Naive thymus-derived CD4-positive, alpha-beta T cell (primary cell): ENCODE measurements at regions of chr2 and their contacts with region 1.

Region 1: GRCh38 chr2:241877989-241878970 is 8.8 kb downstream of the RTP5 start:
- DNase-seq: peak; percentile 53 to 85 (median 73)
- ATAC-seq: no peak
- H3K4me3 ChIP-seq: no peak overlapping the region
- H3K4me3 Mint-ChIP-seq: no peak overlapping the region
- H3K27ac ChIP-seq: no peak overlapping the region
- H3K27ac Mint-ChIP-seq: peak overlapping the region in 1 of 9 donors; percentile 62
- H3K4me1 ChIP-seq: peaks cover 15 to 17% of the 10 kb centered on the region in 2 donors
- H3K4me1 Mint-ChIP-seq: peaks cover 17 to 32% (median 21%) of the 10 kb centered on the region in 7 donors
- H3K27me3 ChIP-seq: no peaks in the 10 kb centered on the region
- H3K27me3 Mint-ChIP-seq: peaks cover 0 to 5% (median 0%) of the 10 kb centered on the region in 5 donors

Region 2: DNA sequence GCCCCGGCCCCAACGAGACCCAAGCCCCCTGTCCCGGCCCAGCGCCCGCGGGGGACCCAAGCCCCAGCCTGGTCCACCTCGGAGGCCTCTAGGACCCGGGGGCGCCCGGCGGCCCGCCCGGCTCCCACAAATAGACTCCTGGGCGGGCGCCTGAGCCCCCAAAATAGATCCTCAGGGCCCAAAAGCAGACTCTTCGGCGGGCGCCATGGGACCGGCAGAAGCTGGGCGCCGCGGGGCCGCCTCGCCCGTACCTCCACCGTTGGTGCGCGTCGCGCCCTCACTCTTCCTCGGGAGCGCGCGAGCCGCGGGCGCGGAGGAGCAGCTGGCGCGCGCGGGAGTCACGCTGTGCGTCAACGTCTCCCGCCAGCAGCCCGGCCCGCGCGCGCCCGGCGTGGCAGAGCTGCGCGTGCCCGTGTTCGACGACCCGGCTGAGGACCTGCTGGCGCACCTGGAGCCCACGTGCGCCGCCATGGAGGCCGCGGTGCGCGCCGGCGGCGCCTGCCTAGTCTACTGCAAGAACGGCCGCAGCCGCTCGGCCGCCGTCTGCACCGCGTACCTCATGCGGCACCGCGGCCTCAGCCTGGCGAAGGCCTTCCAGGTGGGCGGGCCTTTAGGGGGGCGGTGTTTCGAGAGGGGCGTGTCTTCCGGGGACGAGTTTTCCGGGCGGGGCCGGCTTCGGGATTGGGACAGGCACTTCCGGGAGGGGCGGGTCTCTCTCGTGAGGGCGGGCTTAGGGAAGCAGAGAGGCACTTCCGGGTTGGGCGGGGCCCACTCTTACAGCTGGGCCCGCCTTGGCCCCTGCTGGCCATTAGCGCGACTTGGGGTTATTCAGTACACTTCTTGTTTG is 1317.6 kb before region 1 on chr2:
- CTCF ChIA-PET with region 1: no interaction called
- POLR2A ChIA-PET with region 1: no interaction called
- intact Hi-C with region 1: loop called (anchors 5 to 10 kb)
- DNase-seq: peak; percentile 98 to 100 (median 99)
- ATAC-seq: peak; percentile 79
- H3K4me3 ChIP-seq: peak overlapping the region; percentile 82
- H3K4me3 Mint-ChIP-seq: peak overlapping the region; percentile 81 to 96 (median 86)
- H3K27ac ChIP-seq: peak overlapping the region; percentile 93
- H3K27ac Mint-ChIP-seq: peak overlapping the region; percentile 85 to 97 (median 90)
- H3K4me1 ChIP-seq: peaks cover 72 to 74% of the 10 kb centered on the region in 2 donors
- H3K4me1 Mint-ChIP-seq: peaks cover 53 to 79% (median 76%) of the 10 kb centered on the region in 7 donors
- H3K27me3 ChIP-seq: no peaks in the 10 kb centered on the region
- H3K27me3 Mint-ChIP-seq: no peaks in the 10 kb centered on the region

Region 3: GRCh38 chr2:241102239-241102803 is 776.0 kb before region 1 on chr2 and contains the start of gene MTERF4:
- CTCF ChIA-PET with region 1: no interaction called
- POLR2A ChIA-PET with region 1: no interaction called
- intact Hi-C with region 1: loop called in 1 of 2 experiments (anchors 10 kb)
- DNase-seq: peak; percentile 80 to 91 (median 86)
- ATAC-seq: peak; percentile 98
- H3K4me3 ChIP-seq: peak within 1 kb of the TSS; percentile 89
- H3K4me3 Mint-ChIP-seq: peak within 1 kb of the TSS; percentile 86 to 99 (median 96)
- H3K27ac ChIP-seq: peak within 1 kb of the TSS; percentile 92
- H3K27ac Mint-ChIP-seq: peak within 1 kb of the TSS; percentile 96 to 99 (median 99)
- H3K4me1 ChIP-seq: peaks cover 29 to 55% of the 10 kb centered on the region in 2 donors
- H3K4me1 Mint-ChIP-seq: peaks cover 27 to 84% (median 64%) of the 10 kb centered on the region in 7 donors
- H3K27me3 ChIP-seq: no peaks in the 10 kb centered on the region
- H3K27me3 Mint-ChIP-seq: no peaks in the 10 kb centered on the region
- total RNA-seq, gene MTERF4: 45.3 to 214 (median 91.8) TPM

Region 4: DNA sequence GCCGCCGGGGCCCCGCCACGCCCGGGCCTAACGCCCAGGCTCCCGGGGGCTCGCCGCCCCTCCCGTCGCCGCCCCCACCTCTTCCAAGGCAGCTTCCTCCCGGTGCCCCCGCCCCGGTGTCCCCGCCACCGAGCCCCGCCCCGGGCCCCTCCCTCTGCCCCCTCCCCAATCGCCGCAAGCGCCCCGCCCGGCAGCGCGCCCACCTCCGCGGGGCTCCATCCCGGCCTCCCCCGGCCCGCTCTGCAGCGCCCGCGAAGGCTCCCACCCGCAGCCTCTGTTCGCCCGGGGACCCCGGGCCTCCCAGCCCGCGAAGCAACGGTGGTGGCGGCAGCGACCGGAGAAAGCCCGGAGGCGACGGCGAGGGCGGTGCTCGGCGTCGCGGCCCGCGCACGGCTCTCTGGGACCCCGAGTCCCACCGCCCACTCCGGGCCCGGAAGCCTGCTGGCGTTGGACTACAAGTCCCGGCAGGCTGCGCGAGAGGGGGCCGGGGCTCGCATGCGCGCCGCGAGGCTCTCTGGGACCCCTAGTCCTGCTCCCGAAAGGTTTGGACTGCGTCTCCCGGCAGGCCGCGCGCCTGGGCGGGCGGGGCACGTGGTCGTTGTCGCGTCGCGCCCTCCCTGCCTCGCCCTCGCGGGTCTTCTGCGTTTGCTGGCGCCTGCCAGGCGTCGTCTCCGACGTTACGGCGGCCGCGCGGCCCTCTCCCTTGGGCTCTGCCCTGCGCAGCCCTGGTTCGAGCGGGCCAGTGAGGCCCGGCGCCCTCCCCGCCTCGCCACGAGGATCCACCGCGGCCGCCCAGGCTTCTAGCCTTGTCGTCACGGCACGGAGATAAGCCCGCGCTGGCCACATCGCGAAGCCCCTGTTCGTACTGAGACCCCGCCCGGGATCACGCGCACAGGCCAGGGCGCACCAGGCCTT is 369.8 kb before region 1 on chr2 and contains the start of gene STK25:
- CTCF ChIA-PET with region 1: no interaction called
- POLR2A ChIA-PET with region 1: no interaction called
- intact Hi-C with region 1: loop called (anchors 1 to 2 kb)
- DNase-seq: peak; percentile 93 to 98 (median 97)
- ATAC-seq: peak; percentile 96
- H3K4me3 ChIP-seq: peak within 1 kb of the TSS; percentile 70
- H3K4me3 Mint-ChIP-seq: peak within 1 kb of the TSS; percentile 80 to 92 (median 86)
- H3K27ac ChIP-seq: peak within 1 kb of the TSS; percentile 81
- H3K27ac Mint-ChIP-seq: peak within 1 kb of the TSS; percentile 67 to 91 (median 85)
- H3K4me1 ChIP-seq: peaks cover 7 to 16% of the 10 kb centered on the region in 2 donors
- H3K4me1 Mint-ChIP-seq: peaks cover 17 to 33% (median 24%) of the 10 kb centered on the region in 7 donors
- H3K27me3 ChIP-seq: no peaks in the 10 kb centered on the region
- H3K27me3 Mint-ChIP-seq: peaks cover 0 to 1% (median 0%) of the 10 kb centered on the region in 5 donors
- total RNA-seq, gene STK25: 90.8 to 170 (median 115) TPM

Region 5: GRCh38 chr2:241637000-241637791 is 241.1 kb before region 1 on chr2 and contains the starts of genes ATG4B and THAP4:
- CTCF ChIA-PET with region 1: no interaction called
- POLR2A ChIA-PET with region 1: no interaction called
- intact Hi-C with region 1: loop called (anchors 1 to 2 kb)
- DNase-seq: peak; percentile 61 to 89 (median 79)
- ATAC-seq: peak; percentile 82
- H3K4me3 ChIP-seq: peak within 1 kb of the TSS; percentile 99
- H3K4me3 Mint-ChIP-seq: peak within 1 kb of the TSS; percentile 85 to 98 (median 92)
- H3K27ac ChIP-seq: peak within 1 kb of the TSS; percentile 99
- H3K27ac Mint-ChIP-seq: peak within 1 kb of the TSS; percentile 48 to 98 (median 94)
- H3K4me1 ChIP-seq: peaks cover 26 to 27% of the 10 kb centered on the region in 2 donors
- H3K4me1 Mint-ChIP-seq: peaks cover 43 to 63% (median 55%) of the 10 kb centered on the region in 7 donors
- H3K27me3 ChIP-seq: no peaks in the 10 kb centered on the region
- H3K27me3 Mint-ChIP-seq: no peaks in the 10 kb centered on the region
- total RNA-seq, gene ATG4B: 87.2 to 131 (median 95.0) TPM
- total RNA-seq, gene THAP4: 26.4 to 34.8 (median 28.1) TPM

Region 6: DNA sequence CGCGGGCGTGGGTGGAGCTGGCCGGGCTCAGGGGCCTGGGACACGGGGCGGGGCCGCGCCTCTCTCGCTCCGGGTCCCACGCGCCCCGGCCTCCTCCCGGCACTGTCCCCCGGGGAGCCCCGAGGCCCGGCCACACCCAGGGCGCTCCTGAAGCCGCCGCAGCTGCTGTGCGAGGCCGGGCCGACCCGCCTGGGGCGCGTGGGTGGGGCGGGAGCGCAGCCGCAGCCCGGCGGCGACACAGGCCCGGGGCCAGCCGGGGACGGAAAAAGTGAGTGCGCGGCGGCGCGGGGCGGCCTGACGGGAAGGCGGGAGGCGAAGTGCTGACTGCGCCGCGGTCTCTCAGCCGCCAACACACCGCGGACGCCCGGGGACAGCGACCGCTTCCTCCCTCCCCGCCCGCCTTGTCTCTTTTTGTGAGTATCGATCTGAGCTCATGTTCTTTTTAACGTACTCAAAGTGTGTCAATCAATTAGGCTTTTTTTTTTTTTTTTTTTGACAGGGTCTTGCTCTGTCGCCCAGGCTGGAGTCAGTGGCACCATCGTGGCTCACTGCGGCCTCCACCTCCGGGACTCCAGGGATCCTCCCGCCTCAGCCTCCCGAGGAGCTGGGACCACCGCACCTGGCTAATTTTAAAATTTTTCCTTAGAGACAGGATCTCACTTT is 34.1 kb before region 1 on chr2:
- CTCF ChIA-PET with region 1: interaction called, 4 read pairs
- POLR2A ChIA-PET with region 1: interaction called, 3 read pairs
- intact Hi-C with region 1: loop called in 1 of 2 experiments (anchors 5 kb)
- DNase-seq: peak; percentile 36 to 96 (median 56)
- ATAC-seq: peak; percentile 80
- H3K4me3 ChIP-seq: peak overlapping the region; percentile 56
- H3K4me3 Mint-ChIP-seq: peak overlapping the region; percentile 74 to 85 (median 78)
- H3K27ac ChIP-seq: peak overlapping the region; percentile 13
- H3K27ac Mint-ChIP-seq: peak overlapping the region in 6 of 9 donors; percentile 43 to 79 (median 66)
- H3K4me1 ChIP-seq: peaks cover 20 to 28% of the 10 kb centered on the region in 2 donors
- H3K4me1 Mint-ChIP-seq: peaks cover 21 to 34% (median 29%) of the 10 kb centered on the region in 7 donors
- H3K27me3 ChIP-seq: no peaks in the 10 kb centered on the region
- H3K27me3 Mint-ChIP-seq: peaks cover 0 to 6% (median 0%) of the 10 kb centered on the region in 5 donors

Region 7: DNA sequence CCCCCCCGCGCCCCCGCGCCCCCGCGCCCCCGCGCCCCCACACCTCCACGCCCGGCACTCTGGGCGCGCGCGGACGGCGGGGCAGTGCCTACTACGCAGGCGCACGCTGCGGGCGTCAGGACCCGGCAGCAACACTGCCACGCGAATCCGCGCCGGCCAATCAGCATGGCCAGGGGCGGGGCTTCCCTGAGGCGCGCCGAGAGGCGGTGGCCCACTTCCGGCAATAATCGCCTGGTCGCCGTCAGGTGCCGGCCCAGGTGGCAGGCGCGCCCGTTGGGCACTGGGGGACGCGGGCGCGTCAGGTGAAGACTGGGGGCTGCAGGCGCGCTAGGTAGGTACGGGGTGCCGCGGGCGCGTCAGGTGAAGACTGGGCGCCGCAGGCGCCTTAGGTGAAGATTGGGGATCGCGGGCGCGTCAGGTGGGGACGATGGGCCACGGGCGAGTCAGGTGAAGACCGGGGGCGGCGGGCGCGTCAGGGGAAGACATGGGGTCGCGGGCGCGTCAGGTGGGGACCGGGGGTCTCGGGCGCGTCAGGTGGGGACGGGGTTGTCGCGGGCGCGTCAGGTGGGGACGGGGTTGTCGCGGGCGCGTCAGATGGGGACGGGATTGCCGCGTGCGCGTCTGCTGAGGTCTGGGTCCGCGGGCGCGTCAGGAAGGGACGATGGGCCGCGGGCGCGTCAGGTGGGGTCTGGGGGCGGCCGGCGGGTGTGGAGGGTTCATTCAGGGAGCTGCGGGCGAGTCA is 210.4 kb after region 1 on chr2:
- CTCF ChIA-PET with region 1: no interaction called
- POLR2A ChIA-PET with region 1: no interaction called
- intact Hi-C with region 1: loop called in 1 of 2 experiments (anchors 2 kb)
- DNase-seq: peak; percentile 90 to 94 (median 92)
- ATAC-seq: peak; percentile 95
- H3K4me3 ChIP-seq: peak overlapping the region; percentile 55
- H3K4me3 Mint-ChIP-seq: peak overlapping the region; percentile 81 to 99 (median 88)
- H3K27ac ChIP-seq: peak overlapping the region; percentile 75
- H3K27ac Mint-ChIP-seq: peak overlapping the region; percentile 61 to 93 (median 89)
- H3K4me1 ChIP-seq: peaks cover 4 to 11% of the 10 kb centered on the region in 2 donors
- H3K4me1 Mint-ChIP-seq: peaks cover 27 to 57% (median 41%) of the 10 kb centered on the region in 7 donors
- H3K27me3 ChIP-seq: no peaks in the 10 kb centered on the region
- H3K27me3 Mint-ChIP-seq: peaks cover 0 to 18% (median 0%) of the 10 kb centered on the region in 5 donors